GM18951 (cell line): ENCODE measurements at regions of chr1 and their contacts with region 1.

Region 1: DNA sequence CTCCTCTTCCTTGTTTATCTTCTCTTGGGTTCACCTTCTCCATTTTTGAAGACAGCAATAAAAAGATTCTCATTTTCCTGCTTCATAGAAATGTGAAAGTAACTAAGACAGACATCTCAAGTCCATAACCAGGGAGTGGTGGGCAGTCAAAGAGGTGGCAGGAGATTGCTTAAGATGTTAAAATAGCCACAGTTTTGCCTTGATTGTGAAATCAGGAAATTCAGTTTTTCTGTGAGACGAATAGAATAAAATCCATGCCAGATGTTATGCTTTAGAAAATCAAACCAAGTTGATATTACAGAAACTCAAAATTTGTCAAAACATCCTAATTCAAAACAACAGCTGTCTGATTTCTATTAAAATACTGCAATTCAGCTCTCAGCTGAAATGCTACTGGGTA is 57.2 kb downstream of the TNN start:
- POLR2A ChIP-seq: no peak

Region 2: GRCh38 chr1:174769961-174770549 is 354.8 kb before region 1 on chr1:
- in situ Hi-C with region 1: loop called (anchors 25 kb)
- POLR2A ChIP-seq: no peak